MCF 10A (cell line): ENCODE measurements at regions of chr20 and their contacts with region 1.

Region 1: DNA sequence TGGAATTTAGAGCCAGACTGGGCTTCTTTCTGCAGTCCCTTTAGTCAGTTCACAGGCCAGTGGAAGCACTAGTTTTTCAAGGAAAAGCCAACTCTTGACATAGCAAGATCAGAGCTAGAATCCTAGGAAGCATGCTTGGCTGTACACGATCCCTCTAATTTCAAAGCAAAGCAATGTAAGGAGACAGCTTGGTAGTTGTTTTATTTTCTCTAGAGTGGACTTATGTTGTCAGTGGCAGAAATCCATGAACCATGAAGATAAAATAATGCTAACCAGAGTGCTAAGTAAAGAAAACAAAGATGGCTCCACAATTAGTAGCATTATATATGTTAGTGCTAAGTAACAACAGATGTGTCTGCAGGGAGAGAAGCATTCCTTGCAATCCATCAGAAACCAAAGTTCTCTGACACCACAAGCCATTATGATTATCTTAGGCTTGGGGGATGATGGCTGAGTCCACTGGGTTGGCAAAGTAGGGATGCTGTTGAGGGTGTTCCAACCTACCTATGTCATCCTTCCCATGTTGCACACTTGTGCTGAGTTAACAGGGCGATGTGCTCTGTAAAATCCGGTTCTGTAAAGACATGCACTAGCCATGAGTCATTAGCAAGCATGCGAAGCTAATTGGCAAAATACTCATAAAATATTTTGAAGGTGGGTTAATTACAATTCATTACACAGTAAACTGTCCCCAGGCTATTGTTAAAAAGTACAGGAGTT is 115.2 kb downstream of the BMP2 start:
- DNase-seq: peak; percentile 54
- H3K4me3 Mint-ChIP-seq: no peak overlapping the region
- H3K27ac Mint-ChIP-seq: no peak overlapping the region
- H3K4me1 Mint-ChIP-seq: peaks cover 13% of the 10 kb centered on the region
- H3K27me3 Mint-ChIP-seq: no peaks in the 10 kb centered on the region
- CTCF ChIP-seq: no peak

Region 2: GRCh38 chr20:6870559-6870958 is 12.2 kb before region 1 on chr20:
- CTCF ChIA-PET with region 1: interaction called, 5 read pairs
- POLR2A ChIA-PET with region 1: interaction called, 10 read pairs
- intact Hi-C with region 1: no loop called
- DNase-seq: peak; percentile 26
- H3K4me3 Mint-ChIP-seq: no peak overlapping the region
- H3K27ac Mint-ChIP-seq: no peak overlapping the region
- H3K4me1 Mint-ChIP-seq: peaks cover 16% of the 10 kb centered on the region
- H3K27me3 Mint-ChIP-seq: no peaks in the 10 kb centered on the region
- CTCF ChIP-seq: no peak

Region 3: DNA sequence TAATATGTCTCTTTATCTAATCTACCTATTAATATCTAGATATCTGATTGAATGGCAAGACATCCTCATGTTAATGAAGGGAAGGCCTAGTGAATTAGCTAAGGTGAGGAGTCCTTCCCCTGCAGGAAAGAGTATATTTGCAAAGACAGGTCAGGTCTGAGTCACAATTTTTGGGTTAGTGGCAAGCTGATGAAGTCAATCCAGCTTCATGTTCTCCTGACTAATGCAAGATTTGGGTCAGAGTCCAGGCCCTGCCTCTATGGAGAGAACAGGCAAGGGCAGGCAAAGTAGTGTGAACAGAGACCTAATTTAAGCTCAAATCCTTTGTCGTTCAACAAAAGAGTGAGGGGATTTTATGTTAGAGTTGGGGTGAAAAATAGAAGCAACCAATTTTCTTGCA is 381.4 kb after region 1 on chr20:
- CTCF ChIA-PET with region 1: no interaction called
- POLR2A ChIA-PET with region 1: no interaction called
- intact Hi-C with region 1: no loop called
- DNase-seq: peak; percentile 6
- H3K4me3 Mint-ChIP-seq: no peak overlapping the region
- H3K27ac Mint-ChIP-seq: peak overlapping the region; percentile 16
- H3K4me1 Mint-ChIP-seq: peaks cover 7% of the 10 kb centered on the region
- H3K27me3 Mint-ChIP-seq: no peaks in the 10 kb centered on the region
- CTCF ChIP-seq: no peak